ENCODE measurements at regions of chr11 and their contacts with region 1.

Region 1: DNA sequence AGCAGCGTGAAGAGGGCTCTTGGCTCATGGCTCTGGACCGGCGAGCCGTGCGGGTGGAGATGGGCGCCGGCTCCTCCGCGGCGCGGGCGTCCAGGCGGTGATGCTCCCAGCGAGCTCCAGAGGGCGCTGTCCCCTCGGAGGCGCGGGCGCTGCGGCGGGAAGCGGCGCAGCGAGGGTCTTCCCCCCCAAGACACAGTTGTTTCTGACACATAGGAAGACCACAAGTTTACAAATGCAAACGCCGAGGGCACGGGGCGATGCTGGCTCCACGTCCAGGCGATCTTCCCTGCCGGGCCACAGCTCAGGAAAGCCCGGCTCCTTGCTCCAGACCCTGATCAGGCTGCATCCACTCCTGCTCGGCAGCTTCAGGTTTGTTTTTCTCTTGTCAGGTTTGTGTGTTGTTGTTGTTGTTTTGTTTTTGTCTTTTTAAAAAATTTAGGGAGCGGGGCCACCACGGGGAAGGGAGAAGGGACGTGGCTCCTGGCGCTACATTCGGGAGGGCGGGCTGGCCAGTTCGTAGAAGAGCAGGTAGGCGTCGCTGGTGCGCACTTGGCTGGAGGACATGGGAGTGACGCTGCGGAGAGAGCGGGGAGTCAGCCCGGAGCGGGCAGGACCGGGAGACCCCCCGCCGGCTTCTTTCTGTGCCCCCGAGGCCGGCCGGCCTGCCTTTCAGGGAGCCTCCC is 10.0 kb upstream of the MFRP start:
- DNase-seq: no peak
- H3K4me3 ChIP-seq: peak overlapping the region; percentile 48 to 68 (median 62)
- H3K27ac ChIP-seq: peak overlapping the region; percentile 84 to 86 (median 86)
- H3K4me1 ChIP-seq: peaks cover 39 to 58% (median 47%) of the 10 kb centered on the region in 4 donors
- H3K27me3 ChIP-seq: no peaks in the 10 kb centered on the region
- CTCF ChIP-seq: peak; percentile 69 to 96 (median 93)
- EP300 ChIP-seq: no peak
- POLR2A ChIP-seq: no peak

Region 2: DNA sequence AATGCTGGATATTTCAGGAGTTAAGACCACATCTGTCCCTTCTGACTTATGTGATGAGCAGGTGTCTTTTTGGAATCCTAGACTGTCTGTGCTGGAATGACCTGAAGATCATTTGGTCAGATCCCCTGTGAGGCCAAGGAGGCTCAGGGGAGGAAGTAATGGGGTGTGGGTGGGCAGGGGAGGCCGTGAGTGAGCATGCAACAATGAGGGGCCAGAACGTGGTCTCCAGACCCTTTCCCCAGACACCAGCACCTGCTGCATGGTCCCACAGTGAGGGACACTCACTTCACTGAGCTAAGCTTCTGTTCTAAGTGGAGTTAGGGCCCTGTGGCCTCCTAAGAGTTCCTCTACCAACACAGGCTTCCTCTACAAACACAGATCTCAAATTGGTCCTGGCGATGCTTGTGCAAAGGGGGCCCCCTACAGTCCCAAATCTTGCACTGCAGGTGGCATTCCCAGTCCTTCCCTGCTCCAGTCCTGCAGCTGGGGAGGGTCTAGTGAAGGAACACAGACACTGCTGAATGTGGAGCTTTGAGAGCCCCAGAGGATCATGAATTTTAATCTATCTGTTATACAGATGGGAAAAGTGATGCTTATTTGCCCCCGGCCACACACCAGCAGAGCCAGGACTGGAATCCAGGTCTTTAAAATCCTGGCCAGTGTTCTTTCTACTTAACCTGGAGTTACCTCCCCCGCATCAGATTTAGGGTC is 17.6 kb after region 1 on chr11:
- intact Hi-C with region 1: loop called (anchors 1 kb)
- DNase-seq: peak; percentile 95
- H3K4me3 ChIP-seq: no peak overlapping the region
- H3K27ac ChIP-seq: peak overlapping the region; percentile 83 to 93 (median 88)
- H3K4me1 ChIP-seq: peaks cover 73 to 86% (median 82%) of the 10 kb centered on the region in 4 donors
- H3K27me3 ChIP-seq: no peaks in the 10 kb centered on the region
- CTCF ChIP-seq: peak; percentile 93 to 97 (median 96)
- EP300 ChIP-seq: no peak
- POLR2A ChIP-seq: no peak